Dendritic cell treated with granulocyte-macrophage colony-stimulating factor and Interleukin-4, amounts not matched to agents 40 ng/mL and 50 ng/mL, for 4 days (primary cell): ENCODE measurements at regions of chr16 and their contacts with region 1.

Region 1: DNA sequence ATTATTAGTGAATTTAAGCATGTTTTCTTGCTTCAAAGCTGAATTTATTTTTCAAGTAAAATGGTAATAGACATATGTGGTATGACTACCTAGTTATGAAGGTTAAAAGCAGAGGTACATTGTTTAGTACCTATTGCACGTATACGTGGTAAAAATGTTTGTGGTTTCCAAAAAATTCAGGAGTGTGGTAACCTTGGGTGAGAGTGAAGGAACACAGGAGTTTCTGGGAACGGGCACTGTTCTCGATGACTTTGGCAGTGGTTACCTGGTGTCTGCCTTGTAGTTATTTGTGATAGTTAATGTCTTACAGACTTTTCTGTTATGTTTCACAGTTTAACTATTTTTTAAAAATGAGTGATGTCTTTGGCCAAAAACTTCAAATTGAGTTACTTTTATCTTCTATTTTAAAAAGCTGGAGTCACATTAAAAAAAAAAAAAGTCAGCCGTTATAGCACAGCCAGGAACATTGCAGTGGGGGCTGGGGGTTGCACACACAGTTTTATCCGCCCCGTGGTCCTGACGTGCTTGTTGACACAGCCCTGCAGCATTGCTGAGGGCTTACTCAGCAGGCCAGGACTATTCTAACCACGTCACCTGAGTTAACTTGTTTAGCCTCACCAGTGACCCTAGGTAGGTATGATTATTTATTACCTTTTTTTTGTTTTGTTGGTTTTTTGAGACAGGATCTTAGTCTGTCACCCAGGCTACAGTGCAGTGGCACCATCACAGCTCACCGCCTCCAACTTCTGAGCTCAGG is 10.9 kb downstream of the JPT2 start:
- H3K4me3 Mint-ChIP-seq: no peak overlapping the region
- H3K27ac Mint-ChIP-seq: no peak overlapping the region
- H3K4me1 Mint-ChIP-seq: no peaks in the 10 kb centered on the region
- H3K27me3 Mint-ChIP-seq: no peaks in the 10 kb centered on the region

Region 2: GRCh38 chr16:1620391-1620790 is 68.6 kb before region 1 on chr16:
- intact Hi-C with region 1: loop called (anchors 2 kb)
- H3K4me3 Mint-ChIP-seq: no peak overlapping the region
- H3K27ac Mint-ChIP-seq: no peak overlapping the region
- H3K4me1 Mint-ChIP-seq: peaks cover 20% of the 10 kb centered on the region
- H3K27me3 Mint-ChIP-seq: peaks cover under 1% of the 10 kb centered on the region